Activated CD4-positive, alpha-beta T cell treated with anti-CD3 and anti-CD28 coated beads for 36 hours (primary cell): ENCODE measurements at regions of chr13 and their contacts with region 1.

Region 1: DNA sequence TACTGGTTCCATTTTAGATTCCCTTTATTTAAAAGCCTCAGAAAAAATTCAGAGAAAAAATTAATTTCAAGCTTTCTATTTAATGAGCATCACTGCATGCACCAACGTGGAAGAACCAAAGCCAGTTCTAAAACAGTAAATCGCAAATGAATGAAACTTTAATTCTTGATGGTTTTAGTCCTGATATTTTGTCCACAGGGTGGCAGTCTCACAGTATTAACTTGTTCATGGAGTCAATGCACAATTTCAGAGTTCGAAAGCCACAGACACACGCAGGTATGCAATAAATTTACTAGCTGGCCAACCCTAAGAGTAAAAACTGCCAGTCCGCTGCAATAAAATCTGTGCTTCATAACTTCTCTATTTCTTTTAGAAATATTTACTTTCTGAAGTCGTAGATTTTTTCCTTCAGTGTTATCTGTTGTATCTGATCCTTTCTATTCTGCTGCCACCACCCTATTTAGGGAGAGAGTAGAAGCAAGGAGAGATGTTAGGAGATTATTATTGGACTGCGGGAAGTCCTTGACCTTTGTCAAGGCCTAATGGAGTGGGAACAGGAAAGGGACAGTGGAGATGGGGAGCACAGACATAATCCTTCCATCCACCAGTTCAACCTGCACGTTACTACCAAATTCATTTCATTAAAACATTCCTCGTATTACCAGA is 7.0 kb upstream of the WBP4 start:
- DNase-seq: peak; percentile 54
- ATAC-seq: peak; percentile 40
- H3K4me3 Mint-ChIP-seq: peak overlapping the region; percentile 19
- H3K27ac Mint-ChIP-seq: no peak overlapping the region
- H3K4me1 Mint-ChIP-seq: peaks cover 69% of the 10 kb centered on the region
- H3K27me3 Mint-ChIP-seq: no peaks in the 10 kb centered on the region

Region 2: GRCh38 chr13:40974460-40975407 is 79.6 kb before region 1 on chr13:
- CTCF ChIA-PET with region 1: interaction called, 16 read pairs
- POLR2A ChIA-PET with region 1: no interaction called
- intact Hi-C with region 1: no loop called
- DNase-seq: peak; percentile 51
- ATAC-seq: peak; percentile 83
- H3K4me3 Mint-ChIP-seq: peak overlapping the region; percentile 45
- H3K27ac Mint-ChIP-seq: peak overlapping the region; percentile 82
- H3K4me1 Mint-ChIP-seq: peaks cover 94% of the 10 kb centered on the region
- H3K27me3 Mint-ChIP-seq: no peaks in the 10 kb centered on the region

Region 3: GRCh38 chr13:41013835-41014234 is 40.5 kb before region 1 on chr13:
- CTCF ChIA-PET with region 1: interaction called, 32 read pairs
- POLR2A ChIA-PET with region 1: no interaction called
- intact Hi-C with region 1: no loop called
- DNase-seq: no peak
- ATAC-seq: peak; percentile 85
- H3K4me3 Mint-ChIP-seq: peak overlapping the region; percentile 47
- H3K27ac Mint-ChIP-seq: peak overlapping the region; percentile 95
- H3K4me1 Mint-ChIP-seq: peaks cover 47% of the 10 kb centered on the region
- H3K27me3 Mint-ChIP-seq: no peaks in the 10 kb centered on the region

Region 4: GRCh38 chr13:41029629-41030028 is 24.7 kb before region 1 on chr13:
- CTCF ChIA-PET with region 1: interaction called, 17 read pairs
- POLR2A ChIA-PET with region 1: no interaction called
- intact Hi-C with region 1: no loop called
- DNase-seq: peak; percentile 48
- ATAC-seq: peak; percentile 64
- H3K4me3 Mint-ChIP-seq: no peak overlapping the region
- H3K27ac Mint-ChIP-seq: no peak overlapping the region
- H3K4me1 Mint-ChIP-seq: peaks cover 19% of the 10 kb centered on the region
- H3K27me3 Mint-ChIP-seq: no peaks in the 10 kb centered on the region

Region 5: DNA sequence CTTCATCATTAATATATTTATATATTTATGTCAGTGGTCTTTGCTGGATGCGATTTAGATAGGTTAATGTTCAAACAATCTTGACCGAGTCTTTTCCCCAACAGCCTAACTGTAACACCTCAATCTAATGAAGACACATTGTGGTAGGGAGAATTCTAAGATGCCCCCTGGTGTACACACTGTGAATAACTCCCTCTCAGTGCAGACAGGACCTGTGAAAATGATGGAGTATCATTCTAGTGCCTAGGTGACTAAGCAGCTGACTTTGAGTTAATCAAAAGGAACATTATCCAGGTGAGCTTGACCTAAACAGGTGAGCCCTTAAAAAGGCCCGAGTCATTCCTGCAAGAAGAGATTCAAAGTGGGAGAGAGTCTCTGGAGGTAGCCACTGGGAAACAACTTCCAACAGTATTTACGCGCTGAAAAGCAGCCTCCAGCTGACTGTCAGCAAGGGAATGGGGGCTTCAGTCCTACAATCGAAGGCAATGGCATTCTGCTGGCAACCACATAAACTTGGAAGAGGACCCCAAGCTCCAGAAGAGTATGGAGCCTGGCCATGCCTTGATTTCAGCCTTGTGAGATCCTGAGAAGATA is 168.0 kb after region 1 on chr13:
- CTCF ChIA-PET with region 1: interaction called, 10 read pairs
- POLR2A ChIA-PET with region 1: no interaction called
- intact Hi-C with region 1: loop called (anchors 1 kb)
- DNase-seq: peak; percentile 66
- ATAC-seq: peak; percentile 97
- H3K4me3 Mint-ChIP-seq: no peak overlapping the region
- H3K27ac Mint-ChIP-seq: no peak overlapping the region
- H3K4me1 Mint-ChIP-seq: no peaks in the 10 kb centered on the region
- H3K27me3 Mint-ChIP-seq: no peaks in the 10 kb centered on the region